ENCODE measurements at regions of chr9 and their contacts with region 1.

Region 1: DNA sequence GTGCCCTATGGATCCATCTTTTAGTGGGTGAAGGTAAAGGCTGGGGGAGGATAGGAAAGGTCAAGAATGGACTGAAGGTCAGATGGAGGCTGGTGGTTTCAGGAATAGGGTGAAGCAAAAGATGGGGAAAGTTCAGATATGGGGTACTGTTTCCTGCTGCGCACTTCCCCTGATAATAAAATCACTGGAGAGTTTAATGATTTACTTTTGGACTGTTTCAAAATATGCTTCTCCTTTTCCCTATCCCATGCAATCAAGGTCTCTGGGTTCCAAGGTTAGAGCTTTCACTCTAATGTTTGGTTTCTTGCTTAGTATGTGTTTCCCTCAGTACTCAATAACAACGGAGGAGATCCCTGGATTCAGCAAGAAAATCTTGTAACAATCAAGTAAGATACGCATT is 10.8 kb upstream of the PPP3R2 start:
- DNase-seq: no peak
- H3K4me3 ChIP-seq: no peak overlapping the region
- H3K27ac ChIP-seq: no peak overlapping the region
- H3K4me1 ChIP-seq: no peaks in the 10 kb centered on the region
- H3K27me3 ChIP-seq: no peaks in the 10 kb centered on the region
- CTCF ChIP-seq: no peak

Region 2: GRCh38 chr9:101731429-101731828 is 125.9 kb after region 1 on chr9:
- intact Hi-C with region 1: loop called (anchors 5 kb)
- DNase-seq: no peak
- H3K4me3 ChIP-seq: no peak overlapping the region
- H3K27ac ChIP-seq: no peak overlapping the region
- H3K4me1 ChIP-seq: no peaks in the 10 kb centered on the region
- H3K27me3 ChIP-seq: peaks cover 3% of the 10 kb centered on the region
- CTCF ChIP-seq: no peak

Measured in colonic mucosa (tissue), 4 donors.